ENCODE measurements at regions of chr14 and their contacts with region 1.

Region 1: GRCh38 chr14:55212634-55213033 is 21.2 kb upstream of the DLGAP5 start:
- DNase-seq: peak; percentile 74
- H3K4me3 ChIP-seq: peak overlapping the region in 2 of 3 experiments; percentile 31 to 39
- H3K27ac ChIP-seq: peak overlapping the region; percentile 80
- H3K4me1 ChIP-seq: peaks cover 13% of the 10 kb centered on the region
- H3K27me3 ChIP-seq: no peaks in the 10 kb centered on the region
- CTCF ChIP-seq: no peak

Region 2: DNA sequence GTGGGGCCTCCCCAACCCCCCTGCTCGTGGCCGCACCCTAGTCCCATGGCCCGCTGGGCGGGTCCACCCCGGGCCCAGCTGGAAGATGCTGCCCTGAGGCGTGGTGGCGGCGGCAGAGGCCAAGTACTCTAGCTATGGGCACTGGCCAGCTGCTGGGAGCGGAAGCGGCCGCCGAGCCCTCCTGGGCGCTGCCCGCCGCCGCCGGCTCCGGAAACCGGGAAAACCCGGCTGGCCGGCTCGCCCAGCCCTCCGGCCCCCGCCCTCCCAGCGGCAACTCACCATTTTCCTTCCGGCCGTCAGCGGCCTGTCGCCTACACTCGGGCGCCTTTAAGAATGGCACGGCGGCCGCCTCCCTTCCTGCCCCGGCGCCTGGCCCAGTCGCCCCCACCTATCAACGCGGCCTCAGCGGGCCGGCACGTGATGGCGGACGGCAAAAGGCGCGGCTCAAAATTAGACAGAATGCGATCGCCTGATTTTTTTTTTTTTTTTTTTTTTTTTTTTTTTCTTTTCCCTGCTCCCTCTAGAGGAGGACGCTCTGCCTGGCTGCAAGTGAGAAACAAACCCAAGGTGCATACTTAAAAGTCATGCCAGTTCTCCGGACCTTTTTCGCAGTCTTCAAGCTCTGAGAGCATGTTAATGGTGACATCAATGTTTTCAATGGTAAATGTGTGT is 723.9 kb before region 1 on chr14 and contains the start of gene GMFB:
- CTCF ChIA-PET with region 1: no interaction called
- dilution Hi-C with region 1: no loop called
- in situ Hi-C with region 1: no loop called
- intact Hi-C with region 1: no loop called
- DNase-seq: peak; percentile 95
- H3K4me3 ChIP-seq: peak within 1 kb of the TSS; percentile 91 to 97 (median 96)
- H3K27ac ChIP-seq: peak within 1 kb of the TSS; percentile 96
- H3K4me1 ChIP-seq: peaks cover 17% of the 10 kb centered on the region
- H3K27me3 ChIP-seq: no peaks in the 10 kb centered on the region
- CTCF ChIP-seq: peak; percentile 46 to 67
- total RNA-seq, gene GMFB: 65.9 to 104 TPM

Region 3: DNA sequence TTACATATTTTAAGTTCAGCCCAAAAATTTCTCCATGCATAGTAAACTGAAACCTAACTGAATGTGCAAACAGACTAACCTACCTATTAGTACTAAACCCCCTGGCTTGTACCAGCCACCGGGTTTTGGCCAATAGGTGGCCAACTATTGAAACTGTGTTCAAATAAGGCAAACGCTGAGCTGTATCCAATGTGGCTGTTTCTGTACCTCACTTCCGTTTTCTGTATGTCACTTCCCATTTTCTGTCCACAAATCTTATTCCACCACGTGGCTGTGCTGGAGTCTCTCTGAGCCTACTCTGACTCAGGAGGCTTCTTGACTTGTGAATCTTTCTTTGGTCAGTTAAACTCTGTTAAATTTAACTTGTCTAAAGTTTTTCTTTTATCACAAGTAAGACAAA is 52.6 kb after region 1 on chr14:
- CTCF ChIA-PET with region 1: no interaction called
- dilution Hi-C with region 1: no loop called
- in situ Hi-C with region 1: no loop called
- intact Hi-C with region 1: no loop called
- DNase-seq: no peak
- H3K4me3 ChIP-seq: no peak overlapping the region
- H3K27ac ChIP-seq: no peak overlapping the region
- H3K4me1 ChIP-seq: no peaks in the 10 kb centered on the region
- H3K27me3 ChIP-seq: no peaks in the 10 kb centered on the region
- CTCF ChIP-seq: no peak

Region 4: GRCh38 chr14:55354500-55354899 is 141.9 kb after region 1 on chr14:
- CTCF ChIA-PET with region 1: interaction called, 5 read pairs
- dilution Hi-C with region 1: no loop called
- in situ Hi-C with region 1: no loop called
- intact Hi-C with region 1: loop called (anchors 1 kb)
- DNase-seq: peak; percentile 45
- H3K4me3 ChIP-seq: no peak overlapping the region
- H3K27ac ChIP-seq: no peak overlapping the region
- H3K4me1 ChIP-seq: peaks cover 8% of the 10 kb centered on the region
- H3K27me3 ChIP-seq: no peaks in the 10 kb centered on the region
- CTCF ChIP-seq: peak; percentile 55 to 76

Region 5: GRCh38 chr14:55411426-55412389 is 199.1 kb after region 1 on chr14 and contains the start of gene ATG14:
- CTCF ChIA-PET with region 1: no interaction called
- dilution Hi-C with region 1: no loop called
- in situ Hi-C with region 1: no loop called
- intact Hi-C with region 1: loop called (anchors 5 kb)
- DNase-seq: peak; percentile 77
- H3K4me3 ChIP-seq: peak within 1 kb of the TSS; percentile 92 to 99 (median 97)
- H3K27ac ChIP-seq: peak within 1 kb of the TSS; percentile 87
- H3K4me1 ChIP-seq: peaks cover 18% of the 10 kb centered on the region
- H3K27me3 ChIP-seq: no peaks in the 10 kb centered on the region
- CTCF ChIP-seq: no peak
- total RNA-seq, gene ATG14: 5.6 to 11.2 TPM

Region 6: GRCh38 chr14:55430024-55430690 is 217.5 kb after region 1 on chr14:
- CTCF ChIA-PET with region 1: no interaction called
- dilution Hi-C with region 1: no loop called
- in situ Hi-C with region 1: no loop called
- intact Hi-C with region 1: loop called (anchors 1 kb)
- DNase-seq: peak; percentile 87
- H3K4me3 ChIP-seq: no peak overlapping the region
- H3K27ac ChIP-seq: no peak overlapping the region
- H3K4me1 ChIP-seq: peaks cover 15% of the 10 kb centered on the region
- H3K27me3 ChIP-seq: no peaks in the 10 kb centered on the region
- CTCF ChIP-seq: peak; percentile 35 to 65